Activated CD4-positive, alpha-beta T cell treated with anti-CD3 and anti-CD28 coated beads for 36 hours (primary cell): ENCODE measurements at regions of chr6 and their contacts with region 1.

Region 1: DNA sequence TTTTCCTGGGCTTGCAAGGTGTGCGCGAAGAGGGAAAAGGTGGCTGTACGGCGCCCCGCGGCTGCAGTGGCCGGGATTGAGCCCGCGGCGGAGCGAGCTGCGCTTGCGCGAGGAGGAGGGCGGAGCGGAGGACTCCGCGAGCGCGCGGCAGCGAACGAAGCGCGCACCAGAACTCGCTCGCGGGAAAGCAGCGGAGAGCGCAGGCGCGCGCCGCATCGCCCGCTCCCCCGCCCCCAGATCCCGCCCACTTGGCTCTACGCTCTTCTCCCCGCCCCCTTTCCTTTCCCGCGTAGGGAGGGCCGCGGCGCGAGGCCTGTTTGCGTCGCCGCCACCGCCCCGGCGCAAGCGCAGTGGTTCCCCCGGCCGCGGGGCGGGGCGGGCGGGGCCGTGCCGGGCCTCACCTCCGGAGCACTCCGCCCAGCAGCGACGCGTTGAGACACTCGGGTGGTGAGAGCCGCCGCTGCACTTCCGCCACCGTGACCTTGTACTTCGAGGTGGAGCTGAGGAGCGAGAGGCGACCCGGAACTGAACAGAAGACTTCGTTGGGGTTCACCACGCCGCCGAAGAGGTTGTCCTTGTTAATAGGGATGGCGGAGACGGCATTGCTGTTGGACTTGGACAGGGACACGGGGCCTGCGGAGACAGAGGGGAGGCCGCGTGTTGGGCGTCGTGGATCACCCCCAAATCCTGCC is 10.6 kb downstream of the TFAP2A start:
- DNase-seq: peak; percentile 95
- ATAC-seq: peak; percentile 95
- H3K4me3 Mint-ChIP-seq: peak overlapping the region; percentile 71
- H3K27ac Mint-ChIP-seq: peak overlapping the region; percentile 84
- H3K4me1 Mint-ChIP-seq: peaks cover 7% of the 10 kb centered on the region
- H3K27me3 Mint-ChIP-seq: peaks cover 60% of the 10 kb centered on the region

Region 2: GRCh38 chr6:8435160-8435852 is 1968.9 kb before region 1 on chr6 and contains the start of gene SLC35B3:
- CTCF ChIA-PET with region 1: no interaction called
- POLR2A ChIA-PET with region 1: no interaction called
- intact Hi-C with region 1: loop called in 1 of 2 experiments (anchors 1 kb)
- DNase-seq: peak; percentile 99
- ATAC-seq: peak; percentile 95
- H3K4me3 Mint-ChIP-seq: peak within 1 kb of the TSS; percentile 92
- H3K27ac Mint-ChIP-seq: peak within 1 kb of the TSS; percentile 95
- H3K4me1 Mint-ChIP-seq: peaks cover 38% of the 10 kb centered on the region
- H3K27me3 Mint-ChIP-seq: no peaks in the 10 kb centered on the region
- total RNA-seq, gene SLC35B3: 4.9 to 6.7 TPM

Region 3: GRCh38 chr6:10338151-10338550 is 66.1 kb before region 1 on chr6:
- CTCF ChIA-PET with region 1: no interaction called
- POLR2A ChIA-PET with region 1: no interaction called
- intact Hi-C with region 1: no loop called
- DNase-seq: no peak
- ATAC-seq: no peak
- H3K4me3 Mint-ChIP-seq: no peak overlapping the region
- H3K27ac Mint-ChIP-seq: no peak overlapping the region
- H3K4me1 Mint-ChIP-seq: no peaks in the 10 kb centered on the region
- H3K27me3 Mint-ChIP-seq: peaks cover 3% of the 10 kb centered on the region

Region 4: GRCh38 chr6:10429638-10430427 is 25.6 kb after region 1 on chr6:
- CTCF ChIA-PET with region 1: no interaction called
- POLR2A ChIA-PET with region 1: no interaction called
- intact Hi-C with region 1: no loop called
- DNase-seq: no peak
- ATAC-seq: peak; percentile 65
- H3K4me3 Mint-ChIP-seq: peak overlapping the region; percentile 11
- H3K27ac Mint-ChIP-seq: peak overlapping the region; percentile 55
- H3K4me1 Mint-ChIP-seq: peaks cover 19% of the 10 kb centered on the region
- H3K27me3 Mint-ChIP-seq: peaks cover 59% of the 10 kb centered on the region

Region 5: DNA sequence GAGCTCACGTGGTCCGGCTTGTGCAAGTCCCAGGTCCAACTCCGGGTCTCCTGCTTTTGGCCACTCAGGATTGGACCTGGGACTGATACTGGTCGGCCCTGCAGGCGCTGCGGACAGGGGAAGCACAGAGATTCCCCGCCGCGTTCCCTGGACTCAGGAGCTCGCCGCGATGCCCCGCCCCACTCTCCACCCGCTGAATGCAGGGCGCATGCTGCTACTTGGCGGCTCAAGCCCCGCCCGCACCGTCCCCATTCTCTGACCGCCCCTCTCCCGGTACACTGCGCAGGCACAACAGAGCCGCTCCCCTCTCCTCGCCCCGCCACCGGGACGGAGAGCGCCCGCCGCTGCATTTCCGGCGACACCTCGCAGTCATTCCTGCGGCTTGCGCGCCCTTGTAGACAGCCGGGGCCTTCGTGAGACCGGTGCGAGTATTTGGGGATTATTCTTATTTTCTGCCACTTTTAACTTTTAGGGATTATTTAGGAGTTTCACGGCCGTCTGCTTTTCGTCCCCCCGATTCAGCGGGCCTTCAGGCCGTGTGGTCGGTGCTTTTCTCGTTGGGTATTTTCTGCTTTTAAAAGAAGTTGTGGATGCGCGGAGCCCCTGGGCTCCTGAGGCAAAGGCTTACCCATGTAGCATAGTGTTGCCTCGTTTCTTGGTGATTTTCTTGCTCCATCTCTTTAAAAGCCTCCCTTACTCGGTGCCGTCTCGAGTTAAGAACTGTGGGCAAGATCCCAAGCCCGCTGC is 318.7 kb after region 1 on chr6 and contains the start of gene TMEM14C:
- CTCF ChIA-PET with region 1: no interaction called
- POLR2A ChIA-PET with region 1: no interaction called
- intact Hi-C with region 1: loop called in 1 of 2 experiments (anchors 1 kb)
- DNase-seq: peak; percentile 94
- ATAC-seq: peak; percentile 95
- H3K4me3 Mint-ChIP-seq: peak within 1 kb of the TSS; percentile 92
- H3K27ac Mint-ChIP-seq: peak within 1 kb of the TSS; percentile 93
- H3K4me1 Mint-ChIP-seq: peaks cover 49% of the 10 kb centered on the region
- H3K27me3 Mint-ChIP-seq: no peaks in the 10 kb centered on the region
- total RNA-seq, gene TMEM14C: 67.6 to 81.7 TPM

Region 6: DNA sequence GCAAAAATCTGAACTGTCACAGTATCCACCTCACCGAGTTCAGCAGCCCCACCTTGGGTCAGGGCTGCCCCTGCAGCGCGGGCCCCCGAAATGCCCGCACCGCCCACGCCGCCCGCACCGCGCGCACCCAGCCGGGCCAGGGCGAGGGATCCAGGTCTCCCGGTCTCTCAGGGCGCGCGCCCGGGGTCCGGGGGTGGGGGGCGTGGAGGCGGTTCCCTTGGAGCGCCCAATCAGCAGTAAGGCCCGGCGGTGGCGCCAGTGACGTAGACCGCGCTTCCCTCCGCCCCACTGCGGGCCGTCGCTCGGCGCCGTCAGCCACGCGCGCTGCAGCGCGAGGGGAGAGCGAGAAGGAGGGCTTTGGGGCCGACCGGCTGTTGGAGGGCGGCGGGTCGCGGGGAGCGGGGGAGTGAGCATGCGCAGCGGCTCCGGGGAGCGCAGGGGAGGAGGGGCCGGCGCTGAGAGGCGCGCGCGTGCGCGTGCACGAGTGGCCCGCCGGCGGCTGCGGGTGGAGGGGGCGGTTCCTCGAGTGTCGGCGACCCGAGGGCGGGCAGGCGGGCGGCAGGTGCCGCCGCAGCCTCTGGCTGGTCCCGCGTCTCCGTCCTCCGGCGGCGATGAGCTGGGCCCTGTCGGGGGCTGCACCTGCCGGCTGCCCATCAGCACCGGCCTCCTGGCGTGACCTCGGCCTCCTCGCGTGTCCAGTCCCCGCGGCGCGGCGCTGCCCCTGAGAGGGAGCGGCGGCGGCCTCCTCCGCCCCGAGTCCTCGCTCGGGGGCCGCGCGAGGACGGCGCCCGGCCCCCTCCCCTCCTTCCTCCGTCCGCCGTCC is 1133.2 kb after region 1 on chr6 and contains the start of gene TMEM170B:
- CTCF ChIA-PET with region 1: no interaction called
- POLR2A ChIA-PET with region 1: no interaction called
- intact Hi-C with region 1: loop called in 1 of 2 experiments (anchors 1 kb)
- DNase-seq: peak; percentile 95
- ATAC-seq: peak; percentile 96
- H3K4me3 Mint-ChIP-seq: peak within 1 kb of the TSS; percentile 76
- H3K27ac Mint-ChIP-seq: no peak within 1 kb of the TSS
- H3K4me1 Mint-ChIP-seq: peaks cover 5% of the 10 kb centered on the region
- H3K27me3 Mint-ChIP-seq: peaks cover 8% of the 10 kb centered on the region
- total RNA-seq, gene TMEM170B: 0.98 to 1.3 TPM